Activated CD4-positive, alpha-beta T cell treated with anti-CD3 and anti-CD28 coated beads for 36 hours (primary cell): ENCODE measurements at regions of chr21 and their contacts with region 1.

Region 1: DNA sequence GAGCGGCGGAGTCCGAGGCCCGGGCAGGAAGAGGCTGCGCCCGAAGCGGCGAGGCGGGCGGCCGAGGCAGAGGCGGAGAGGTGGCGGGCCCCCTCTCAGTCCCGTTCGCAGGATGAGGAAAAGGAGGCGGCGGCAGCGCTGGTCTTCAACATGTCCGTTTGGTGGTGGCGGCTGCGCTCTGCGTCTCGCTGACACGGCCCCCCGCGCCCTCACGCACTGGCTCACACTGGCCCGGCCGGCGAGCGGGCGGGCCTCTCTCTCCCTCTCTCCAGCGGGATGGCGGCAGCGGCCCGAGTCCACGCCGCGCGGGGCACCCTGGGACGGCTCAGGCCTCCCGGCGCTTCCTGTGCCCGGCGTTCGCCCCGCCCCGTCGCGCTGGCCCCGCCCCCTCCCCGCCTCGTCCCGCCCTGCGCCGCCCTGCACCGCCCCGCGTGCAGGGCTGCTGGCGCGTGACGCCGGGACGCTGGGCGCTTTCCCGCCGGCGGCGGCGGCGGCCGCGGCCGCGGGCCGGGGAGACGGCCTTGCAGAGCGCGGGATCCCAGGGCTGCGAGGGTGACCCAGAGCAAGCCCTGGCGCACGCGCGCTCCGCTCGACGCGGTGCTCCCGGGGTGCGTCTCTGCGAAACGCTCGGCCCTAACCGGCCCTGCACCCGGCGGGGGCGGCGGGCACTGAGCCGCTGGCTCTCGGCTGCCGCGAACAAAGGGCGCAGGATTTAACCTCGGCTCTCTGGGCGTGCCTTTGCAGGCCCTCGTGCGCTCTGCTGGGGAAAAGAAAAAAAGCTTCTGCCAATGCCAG is at the start of gene SCAF4:
- DNase-seq: peak; percentile 90
- ATAC-seq: peak; percentile 88
- H3K4me3 Mint-ChIP-seq: no peak within 1 kb of the TSS
- H3K27ac Mint-ChIP-seq: peak within 1 kb of the TSS; percentile 78
- H3K4me1 Mint-ChIP-seq: peaks cover 11% of the 10 kb centered on the region
- H3K27me3 Mint-ChIP-seq: no peaks in the 10 kb centered on the region
- total RNA-seq, gene SCAF4: 47.1 to 62.8 TPM

Region 2: DNA sequence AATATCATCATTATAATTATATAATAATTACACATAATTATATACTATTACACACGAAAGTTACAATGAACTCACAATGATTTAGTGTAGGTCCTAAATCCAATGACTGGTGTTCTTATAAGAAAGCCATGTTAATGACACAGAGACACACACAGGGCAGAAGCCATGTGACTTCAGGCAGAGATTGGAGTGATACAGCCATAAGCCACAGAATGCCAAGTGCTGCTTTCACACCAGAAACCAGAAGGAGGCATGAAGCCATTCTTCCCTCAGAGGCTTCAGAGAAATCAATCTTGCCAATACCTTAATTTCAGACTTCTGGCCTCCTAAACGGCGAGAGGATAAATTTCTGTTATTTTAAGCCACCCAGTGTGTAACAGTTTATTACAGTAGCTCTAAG is 546.3 kb before region 1 on chr21:
- CTCF ChIA-PET with region 1: no interaction called
- POLR2A ChIA-PET with region 1: no interaction called
- intact Hi-C with region 1: loop called in 1 of 2 experiments (anchors 2 kb)
- DNase-seq: peak; percentile 51
- ATAC-seq: peak; percentile 20
- H3K4me3 Mint-ChIP-seq: peak overlapping the region; percentile 70
- H3K27ac Mint-ChIP-seq: peak overlapping the region; percentile 99
- H3K4me1 Mint-ChIP-seq: peaks cover 82% of the 10 kb centered on the region
- H3K27me3 Mint-ChIP-seq: no peaks in the 10 kb centered on the region

Region 3: DNA sequence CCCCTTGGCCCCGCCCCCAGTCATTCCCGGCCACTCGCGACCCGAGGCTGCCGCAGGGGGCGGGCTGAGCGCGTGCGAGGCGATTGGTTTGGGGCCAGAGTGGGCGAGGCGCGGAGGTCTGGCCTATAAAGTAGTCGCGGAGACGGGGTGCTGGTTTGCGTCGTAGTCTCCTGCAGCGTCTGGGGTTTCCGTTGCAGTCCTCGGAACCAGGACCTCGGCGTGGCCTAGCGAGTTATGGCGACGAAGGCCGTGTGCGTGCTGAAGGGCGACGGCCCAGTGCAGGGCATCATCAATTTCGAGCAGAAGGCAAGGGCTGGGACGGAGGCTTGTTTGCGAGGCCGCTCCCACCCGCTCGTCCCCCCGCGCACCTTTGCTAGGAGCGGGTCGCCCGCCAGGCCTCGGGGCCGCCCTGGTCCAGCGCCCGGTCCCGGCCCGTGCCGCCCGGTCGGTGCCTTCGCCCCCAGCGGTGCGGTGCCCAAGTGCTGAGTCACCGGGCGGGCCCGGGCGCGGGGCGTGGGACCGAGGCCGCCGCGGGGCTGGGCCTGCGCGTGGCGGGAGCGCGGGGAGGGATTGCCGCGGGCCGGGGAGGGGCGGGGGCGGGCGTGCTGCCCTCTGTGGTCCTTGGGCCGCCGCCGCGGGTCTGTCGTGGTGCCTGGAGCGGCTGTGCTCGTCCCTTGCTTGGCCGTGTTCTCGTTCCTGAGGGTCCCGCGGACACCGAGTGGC is 72.3 kb before region 1 on chr21 and contains the start of gene SOD1:
- CTCF ChIA-PET with region 1: interaction called, 3 read pairs
- POLR2A ChIA-PET with region 1: no interaction called
- intact Hi-C with region 1: loop called (anchors 1 to 2 kb)
- DNase-seq: peak; percentile 97
- ATAC-seq: peak; percentile 93
- H3K4me3 Mint-ChIP-seq: peak within 1 kb of the TSS; percentile 88
- H3K27ac Mint-ChIP-seq: peak within 1 kb of the TSS; percentile 99
- H3K4me1 Mint-ChIP-seq: peaks cover 68% of the 10 kb centered on the region
- H3K27me3 Mint-ChIP-seq: no peaks in the 10 kb centered on the region
- total RNA-seq, gene SOD1: 232 to 284 TPM

Region 4: DNA sequence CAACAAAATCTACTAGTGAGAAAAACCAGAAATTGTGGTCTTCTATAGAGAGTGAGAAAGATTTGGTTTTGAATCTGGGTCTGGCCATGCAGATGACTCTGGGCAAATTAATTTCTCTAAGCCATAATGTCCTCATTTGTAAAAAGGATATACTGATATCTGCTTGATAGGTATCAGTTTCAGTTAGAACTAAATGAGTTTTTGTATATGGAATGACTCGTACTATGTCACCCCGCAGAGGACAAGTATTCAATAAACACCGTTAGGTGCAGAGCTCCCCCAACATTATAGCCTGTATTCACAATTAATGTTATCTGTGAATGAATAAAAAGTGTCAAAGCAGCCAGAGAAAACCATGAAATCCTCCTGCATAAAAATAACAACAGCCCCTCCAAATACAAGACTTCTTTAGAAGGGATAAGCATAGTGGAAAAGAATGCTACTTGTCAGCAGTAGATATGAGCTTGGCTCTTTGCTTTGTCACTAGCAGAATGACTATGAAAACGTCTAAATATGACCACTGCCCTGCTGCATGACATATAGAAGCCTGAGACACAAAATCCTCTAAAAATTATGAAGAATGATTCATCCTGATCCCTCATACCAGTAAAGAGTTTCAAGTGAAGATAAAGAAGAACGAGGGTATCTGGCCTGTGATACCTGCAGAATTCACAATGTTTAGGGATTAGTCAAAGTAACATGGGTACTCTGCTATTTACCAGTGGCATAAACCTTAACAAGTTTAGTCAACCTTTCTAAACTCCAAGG is 17.8 kb before region 1 on chr21:
- CTCF ChIA-PET with region 1: no interaction called
- POLR2A ChIA-PET with region 1: no interaction called
- intact Hi-C with region 1: loop called (anchors 2 kb)
- DNase-seq: no peak
- ATAC-seq: peak; percentile 95
- H3K4me3 Mint-ChIP-seq: no peak overlapping the region
- H3K27ac Mint-ChIP-seq: peak overlapping the region; percentile 74
- H3K4me1 Mint-ChIP-seq: peaks cover 84% of the 10 kb centered on the region
- H3K27me3 Mint-ChIP-seq: no peaks in the 10 kb centered on the region

Region 5: GRCh38 chr21:32412162-32413014 is 680.4 kb after region 1 on chr21 and contains the start of gene EVA1C:
- CTCF ChIA-PET with region 1: no interaction called
- POLR2A ChIA-PET with region 1: no interaction called
- intact Hi-C with region 1: loop called in 1 of 2 experiments (anchors 5 kb)
- DNase-seq: peak; percentile 80
- ATAC-seq: peak; percentile 68
- H3K4me3 Mint-ChIP-seq: peak within 1 kb of the TSS; percentile 94
- H3K27ac Mint-ChIP-seq: peak within 1 kb of the TSS; percentile 97
- H3K4me1 Mint-ChIP-seq: peaks cover 28% of the 10 kb centered on the region
- H3K27me3 Mint-ChIP-seq: no peaks in the 10 kb centered on the region
- total RNA-seq, gene EVA1C: 9.3 to 10.4 TPM

Region 6: DNA sequence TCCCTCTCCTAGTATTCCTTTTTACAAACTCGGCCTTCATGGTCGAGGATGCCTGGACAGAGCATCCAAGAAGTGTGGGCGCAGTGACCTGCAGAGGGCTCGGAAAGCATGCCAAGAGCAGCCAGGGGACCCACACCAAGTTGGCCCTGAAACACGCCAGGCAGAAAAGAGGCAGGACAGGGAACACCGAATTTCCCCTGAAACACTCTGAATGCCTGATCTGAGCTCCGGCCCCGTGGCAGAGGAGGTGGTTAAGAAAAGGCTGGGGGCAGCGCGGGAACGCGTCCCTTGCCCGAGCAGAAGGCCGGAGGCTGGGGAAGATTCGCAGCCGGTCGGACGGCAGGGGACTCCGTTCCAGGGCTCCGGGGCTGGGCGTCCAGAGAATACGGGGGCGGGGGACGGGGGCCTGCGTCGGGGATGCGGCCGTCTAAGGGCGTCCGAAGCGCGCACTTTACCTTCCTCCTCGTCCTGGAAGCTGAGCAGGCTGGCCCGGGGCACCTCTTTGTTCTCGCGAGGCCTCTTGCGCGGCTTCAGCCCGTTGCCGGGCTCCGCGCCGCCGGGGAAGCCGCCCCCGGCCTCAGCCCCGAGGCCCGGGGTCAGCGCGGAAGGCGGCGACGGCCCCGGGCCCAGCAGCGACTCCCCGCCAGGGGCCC is 1039.0 kb after region 1 on chr21:
- CTCF ChIA-PET with region 1: no interaction called
- POLR2A ChIA-PET with region 1: no interaction called
- intact Hi-C with region 1: loop called in 1 of 2 experiments (anchors 10 kb)
- DNase-seq: peak; percentile 76
- ATAC-seq: peak; percentile 17
- H3K4me3 Mint-ChIP-seq: peak overlapping the region; percentile 99
- H3K27ac Mint-ChIP-seq: peak overlapping the region; percentile 96
- H3K4me1 Mint-ChIP-seq: peaks cover 54% of the 10 kb centered on the region
- H3K27me3 Mint-ChIP-seq: no peaks in the 10 kb centered on the region